ENCODE measurements at regions of chr1 and their contacts with region 1.

Region 1: DNA sequence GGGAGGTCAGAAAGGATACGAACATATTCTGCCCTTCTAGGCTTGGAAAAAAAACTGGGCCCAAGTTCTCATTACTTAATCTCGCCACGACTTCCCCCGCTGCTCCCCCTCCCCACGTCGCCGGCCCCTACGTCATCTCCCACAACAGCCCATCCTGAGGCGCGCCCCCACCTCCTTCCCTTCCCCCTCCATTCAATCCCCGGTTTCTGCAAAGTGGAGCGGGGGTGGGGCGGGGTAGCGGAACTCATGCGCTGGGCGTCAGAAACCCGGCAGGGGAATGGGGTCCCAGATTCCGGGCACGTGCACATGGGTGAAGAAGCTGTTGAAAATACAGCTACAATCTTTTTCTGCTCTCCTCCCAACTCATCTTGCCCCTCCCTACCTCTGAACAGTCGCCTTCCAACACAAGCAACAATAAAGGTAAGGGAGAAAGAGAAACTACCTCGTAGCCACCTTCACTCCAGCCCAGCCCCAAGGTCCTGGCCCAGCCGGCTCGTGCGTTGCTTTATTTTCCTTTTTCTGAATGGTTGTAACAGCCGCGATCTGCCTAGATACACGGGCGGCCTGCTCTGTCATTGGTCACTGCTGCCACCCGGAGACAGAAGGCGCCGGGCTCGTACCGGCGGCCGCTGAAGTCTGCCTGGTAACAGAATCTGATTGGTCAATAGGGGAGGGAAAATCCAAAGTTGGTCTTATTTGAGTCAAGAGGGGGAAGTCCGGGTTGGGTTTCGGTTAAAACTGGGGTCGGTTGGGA is at the start of gene RFX5:
- H3K4me3 Mint-ChIP-seq: peak within 1 kb of the TSS; percentile 85
- H3K27ac Mint-ChIP-seq: peak within 1 kb of the TSS; percentile 97
- H3K4me1 Mint-ChIP-seq: peaks cover 60% of the 10 kb centered on the region
- H3K27me3 Mint-ChIP-seq: no peaks in the 10 kb centered on the region

Region 2: GRCh38 chr1:150987924-150988323 is 359.0 kb before region 1 on chr1:
- intact Hi-C with region 1: no loop called
- H3K4me3 Mint-ChIP-seq: no peak overlapping the region
- H3K27ac Mint-ChIP-seq: no peak overlapping the region
- H3K4me1 Mint-ChIP-seq: no peaks in the 10 kb centered on the region
- H3K27me3 Mint-ChIP-seq: no peaks in the 10 kb centered on the region

Region 3: GRCh38 chr1:151399890-151400495 is 53.0 kb after region 1 on chr1:
- intact Hi-C with region 1: loop called (anchors 2 kb)
- H3K4me3 Mint-ChIP-seq: peak overlapping the region; percentile 91
- H3K27ac Mint-ChIP-seq: peak overlapping the region; percentile 99
- H3K4me1 Mint-ChIP-seq: peaks cover 18% of the 10 kb centered on the region
- H3K27me3 Mint-ChIP-seq: peaks cover 5% of the 10 kb centered on the region

Region 4: DNA sequence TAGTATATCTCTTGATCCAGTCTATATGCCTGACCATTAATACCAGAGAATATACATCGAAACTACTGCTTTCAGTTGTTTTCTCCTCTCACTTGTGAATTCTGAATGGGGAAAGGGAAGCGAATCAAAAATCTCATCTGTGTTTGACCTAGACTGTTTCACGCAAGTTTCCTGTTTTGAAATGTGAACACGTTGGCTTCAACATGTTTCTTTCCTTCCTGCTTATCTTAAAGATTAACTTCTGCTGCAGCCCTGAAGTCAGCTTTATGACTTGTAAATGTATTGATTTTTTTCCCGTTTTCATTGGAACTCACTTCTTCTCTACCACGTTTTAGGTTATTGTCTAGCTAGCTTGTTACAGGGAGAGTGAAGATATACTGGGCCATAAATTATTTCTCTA is 314.8 kb after region 1 on chr1:
- intact Hi-C with region 1: no loop called
- H3K4me3 Mint-ChIP-seq: no peak overlapping the region
- H3K27ac Mint-ChIP-seq: peak overlapping the region; percentile 35
- H3K4me1 Mint-ChIP-seq: peaks cover 29% of the 10 kb centered on the region
- H3K27me3 Mint-ChIP-seq: no peaks in the 10 kb centered on the region